ENCODE measurements at regions of chr12 and their contacts with region 1.

Region 1: GRCh38 chr12:40152783-40153383 is 47.0 kb upstream of the SLC2A13 start:
- DNase-seq: peak; percentile 68
- H3K4me3 ChIP-seq: no peak overlapping the region
- H3K27ac ChIP-seq: no peak overlapping the region
- H3K4me1 ChIP-seq: no peaks in the 10 kb centered on the region
- H3K27me3 ChIP-seq: no peaks in the 10 kb centered on the region
- CTCF ChIP-seq: peak in 3 of 4 experiments; percentile 53 to 88 (median 67)
- EP300 ChIP-seq: no peak
- POLR2A ChIP-seq: no peak

Region 2: DNA sequence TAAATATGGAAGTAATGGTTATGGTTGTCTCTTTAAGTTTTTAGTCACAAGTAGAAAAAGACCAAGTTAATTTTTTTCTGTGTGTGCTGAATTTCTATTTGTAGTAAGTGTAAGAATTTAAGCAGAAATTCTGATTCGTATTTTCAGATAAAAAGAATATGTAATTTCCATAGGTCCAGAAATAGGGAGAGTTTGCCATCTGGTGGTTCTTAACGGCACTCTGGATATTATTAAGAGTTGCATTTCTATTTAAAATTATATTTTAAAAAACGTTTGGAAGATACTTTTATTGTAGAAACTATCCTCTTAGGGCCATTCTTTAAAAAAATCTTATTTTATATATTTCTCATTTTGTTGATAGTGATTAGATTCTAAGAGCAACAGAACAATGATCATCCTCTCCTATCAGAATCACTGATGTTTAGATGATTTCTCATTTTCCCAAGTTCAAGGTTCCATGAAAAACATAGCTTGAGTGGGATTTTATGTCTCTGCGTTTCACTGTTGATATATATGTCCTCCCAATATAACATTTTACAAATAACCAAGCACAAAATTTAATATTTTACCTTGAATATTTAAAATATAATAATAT is 160.2 kb after region 1 on chr12:
- intact Hi-C with region 1: loop called (anchors 5 kb)
- DNase-seq: no peak
- H3K4me3 ChIP-seq: no peak overlapping the region
- H3K27ac ChIP-seq: no peak overlapping the region
- H3K4me1 ChIP-seq: no peaks in the 10 kb centered on the region
- H3K27me3 ChIP-seq: no peaks in the 10 kb centered on the region
- CTCF ChIP-seq: peak in 1 of 4 experiments; percentile 37
- EP300 ChIP-seq: no peak
- POLR2A ChIP-seq: no peak

Region 3: GRCh38 chr12:40331886-40332285 is 179.0 kb after region 1 on chr12:
- intact Hi-C with region 1: no loop called
- DNase-seq: no peak
- H3K4me3 ChIP-seq: no peak overlapping the region
- H3K27ac ChIP-seq: no peak overlapping the region
- H3K4me1 ChIP-seq: peaks cover 0 to 6% (median 3%) of the 10 kb centered on the region in 4 donors
- H3K27me3 ChIP-seq: no peaks in the 10 kb centered on the region
- CTCF ChIP-seq: no peak
- EP300 ChIP-seq: no peak
- POLR2A ChIP-seq: no peak